Gastrocnemius medialis (tissue), 4 donors: ENCODE measurements at regions of chr4 and their contacts with region 1.

Region 1: GRCh38 chr4:153142700-153143438 is 61.4 kb upstream of the TRIM2 start:
- DNase-seq: peak; percentile 8 to 35
- ATAC-seq: peak; percentile 60 to 65
- H3K4me3 ChIP-seq: peak overlapping the region in 3 of 4 donors; percentile 16 to 44 (median 26)
- H3K27ac ChIP-seq: no peak overlapping the region
- H3K4me1 ChIP-seq: peaks cover 0 to 6% of the 10 kb centered on the region in 2 donors
- H3K27me3 ChIP-seq: no peaks in the 10 kb centered on the region
- CTCF ChIP-seq: peak; percentile 68 to 82 (median 74)
- POLR2A ChIP-seq: no peak

Region 2: DNA sequence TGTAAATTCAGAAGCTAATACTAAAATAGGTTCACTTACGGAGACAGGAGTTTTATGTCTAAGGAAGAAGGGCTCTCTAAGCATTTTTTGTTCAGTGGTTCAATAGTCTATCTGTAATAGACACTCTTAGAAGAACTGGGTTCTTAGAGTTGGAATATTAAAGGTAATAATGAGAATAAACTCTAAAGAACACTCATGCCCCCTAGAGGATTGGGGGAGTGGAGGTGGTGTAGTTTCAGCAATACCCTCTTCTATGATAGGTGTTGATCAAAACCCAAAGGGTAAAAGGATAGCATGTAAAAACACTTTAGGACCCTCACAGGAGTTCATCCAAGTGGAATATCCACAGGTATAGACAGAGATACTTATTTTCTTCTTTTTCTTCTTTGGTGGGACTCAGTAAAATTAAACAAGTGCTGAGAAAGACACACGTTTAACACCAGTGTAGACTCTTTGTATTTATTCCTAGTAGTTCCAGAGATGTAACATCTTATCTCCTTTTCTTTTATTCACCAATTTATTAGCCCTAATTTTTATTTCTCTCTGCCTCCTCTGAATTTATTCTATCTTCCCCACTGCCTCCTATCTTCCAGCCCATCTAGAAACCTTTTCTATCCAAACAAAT is 175.9 kb after region 1 on chr4:
- in situ Hi-C with region 1: loop called (anchors 5 to 10 kb)
- intact Hi-C with region 1: loop called (anchors 1 kb)
- DNase-seq: no peak
- ATAC-seq: peak in 1 of 2 donors; percentile 44
- H3K4me3 ChIP-seq: no peak overlapping the region
- H3K27ac ChIP-seq: no peak overlapping the region
- H3K4me1 ChIP-seq: no peaks in the 10 kb centered on the region
- H3K27me3 ChIP-seq: no peaks in the 10 kb centered on the region
- CTCF ChIP-seq: peak; percentile 30 to 65 (median 47)
- POLR2A ChIP-seq: no peak

Region 3: GRCh38 chr4:153326513-153326912 is 183.6 kb after region 1 on chr4:
- in situ Hi-C with region 1: loop called in 2 of 4 experiments (anchors 5 to 10 kb)
- intact Hi-C with region 1: no loop called
- DNase-seq: no peak
- ATAC-seq: no peak
- H3K4me3 ChIP-seq: no peak overlapping the region
- H3K27ac ChIP-seq: no peak overlapping the region
- H3K4me1 ChIP-seq: no peaks in the 10 kb centered on the region
- H3K27me3 ChIP-seq: no peaks in the 10 kb centered on the region
- CTCF ChIP-seq: no peak
- POLR2A ChIP-seq: no peak

Region 4: GRCh38 chr4:153649572-153649991 is 506.7 kb after region 1 on chr4:
- in situ Hi-C with region 1: loop called in 1 of 4 experiments (anchors 25 kb)
- intact Hi-C with region 1: loop called (anchors 5 kb)
- DNase-seq: no peak
- ATAC-seq: no peak
- H3K4me3 ChIP-seq: no peak overlapping the region
- H3K27ac ChIP-seq: no peak overlapping the region
- H3K4me1 ChIP-seq: no peaks in the 10 kb centered on the region
- H3K27me3 ChIP-seq: no peaks in the 10 kb centered on the region
- CTCF ChIP-seq: peak in 1 of 5 experiments; percentile 13
- POLR2A ChIP-seq: no peak